ENCODE measurements at regions of chr4 and their contacts with region 1.

Region 1: GRCh38 chr4:184263910-184264732 is 46.4 kb upstream of the ENPP6 start:
- DNase-seq: peak; percentile 97
- ATAC-seq: peak; percentile 55
- H3K4me3 Mint-ChIP-seq: peak overlapping the region; percentile 8
- H3K27ac Mint-ChIP-seq: peak overlapping the region; percentile 65
- H3K4me1 Mint-ChIP-seq: peaks cover 55% of the 10 kb centered on the region
- H3K27me3 Mint-ChIP-seq: peaks cover 4% of the 10 kb centered on the region

Region 2: GRCh38 chr4:184237612-184238011 is 26.5 kb before region 1 on chr4:
- CTCF ChIA-PET with region 1: interaction called, 18 read pairs
- DNase-seq: peak; percentile 86
- ATAC-seq: peak; percentile 97
- H3K4me3 Mint-ChIP-seq: peak overlapping the region; percentile 35
- H3K27ac Mint-ChIP-seq: peak overlapping the region; percentile 90
- H3K4me1 Mint-ChIP-seq: peaks cover 50% of the 10 kb centered on the region
- H3K27me3 Mint-ChIP-seq: no peaks in the 10 kb centered on the region

Region 3: DNA sequence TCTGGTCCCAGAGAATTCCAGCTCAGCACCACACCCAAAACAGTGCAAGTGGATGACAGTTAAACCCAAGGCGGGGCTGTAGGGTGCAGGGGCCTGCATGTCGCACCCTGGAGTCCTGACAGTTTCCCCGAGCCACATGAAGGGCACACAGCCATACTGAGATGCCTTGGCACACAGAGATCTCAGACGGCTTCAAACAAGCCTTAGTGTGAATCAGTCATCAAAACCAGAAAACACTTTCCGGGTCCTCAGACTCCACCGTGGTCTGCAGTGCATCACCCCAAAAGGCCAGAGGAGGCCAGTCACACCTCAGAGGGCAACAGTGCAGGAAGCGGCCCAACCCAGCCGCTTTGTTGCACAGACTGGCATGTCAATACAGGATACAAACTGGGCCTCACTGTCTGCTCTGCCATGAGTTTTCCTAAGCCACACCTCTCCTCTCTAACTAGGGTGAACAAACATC is 18.2 kb after region 1 on chr4:
- CTCF ChIA-PET with region 1: interaction called, 153 read pairs
- DNase-seq: peak; percentile 88
- ATAC-seq: peak; percentile 86
- H3K4me3 Mint-ChIP-seq: peak overlapping the region; percentile 13
- H3K27ac Mint-ChIP-seq: peak overlapping the region; percentile 95
- H3K4me1 Mint-ChIP-seq: peaks cover 61% of the 10 kb centered on the region
- H3K27me3 Mint-ChIP-seq: no peaks in the 10 kb centered on the region

Region 4: DNA sequence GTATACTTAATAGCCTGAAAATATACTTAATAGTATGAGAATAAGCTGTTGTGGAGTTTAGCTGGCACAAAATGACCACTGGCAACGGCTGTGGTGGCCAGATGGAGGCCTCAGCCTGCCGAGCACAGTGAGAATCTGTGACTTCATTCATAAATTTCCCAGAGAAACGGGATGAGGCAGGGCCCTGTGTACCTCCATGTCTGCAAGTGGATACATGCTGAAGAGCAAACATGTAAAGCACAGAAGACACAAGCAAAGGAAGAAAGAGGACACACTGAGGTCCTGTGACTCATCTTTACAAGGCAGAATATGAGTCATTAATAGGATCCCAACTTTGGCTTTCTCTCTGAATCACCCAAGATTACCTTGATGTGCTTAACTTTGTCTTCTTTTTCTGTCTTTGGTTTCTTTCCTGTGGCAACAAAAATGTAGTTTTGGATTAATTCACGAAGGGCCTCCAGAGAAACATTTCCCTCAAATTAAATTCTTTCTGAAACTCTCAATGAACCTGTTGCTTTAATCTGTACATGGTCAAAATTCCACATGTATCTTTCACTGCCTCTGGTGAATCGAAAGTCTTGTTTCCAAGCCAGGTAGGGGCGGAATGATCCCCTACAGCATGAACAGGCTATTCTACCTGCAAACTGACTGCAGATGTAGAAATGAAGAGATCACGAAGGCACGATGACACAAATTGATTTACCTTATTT is 153.8 kb after region 1 on chr4:
- CTCF ChIA-PET with region 1: interaction called, 15 read pairs
- DNase-seq: peak; percentile 49
- ATAC-seq: peak; percentile 81
- H3K4me3 Mint-ChIP-seq: peak overlapping the region; percentile 75
- H3K27ac Mint-ChIP-seq: peak overlapping the region; percentile 95
- H3K4me1 Mint-ChIP-seq: peaks cover 86% of the 10 kb centered on the region
- H3K27me3 Mint-ChIP-seq: no peaks in the 10 kb centered on the region

Region 5: DNA sequence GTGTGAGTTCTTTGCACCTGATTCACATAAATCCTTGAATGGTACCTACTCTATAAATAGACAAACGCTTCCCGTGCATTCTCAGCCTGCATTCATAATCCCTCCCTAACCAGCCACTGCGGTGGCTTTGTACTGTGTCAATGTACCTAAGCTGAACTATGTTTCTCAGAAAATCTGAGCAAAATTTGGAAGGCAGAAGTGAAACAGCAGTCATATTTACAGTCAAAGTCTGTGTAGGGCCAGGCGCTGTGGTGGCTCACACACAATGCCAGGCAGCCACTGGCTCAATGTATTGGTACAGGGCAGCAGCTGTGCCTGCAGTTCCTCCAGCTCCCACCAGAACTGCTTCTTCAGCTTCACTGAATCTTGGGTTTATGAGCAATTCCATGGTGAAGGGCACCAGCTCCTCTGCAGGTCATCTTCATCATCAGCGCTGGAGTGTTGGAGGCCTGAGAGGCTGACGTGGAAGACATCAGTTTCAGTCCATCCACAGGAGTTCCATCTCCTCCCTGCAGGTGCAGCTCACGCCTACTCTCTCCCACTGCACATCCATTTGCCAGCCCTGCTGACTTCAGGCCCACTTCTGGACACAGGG is 242.5 kb after region 1 on chr4:
- CTCF ChIA-PET with region 1: interaction called, 10 read pairs
- DNase-seq: peak; percentile 76
- ATAC-seq: peak; percentile 92
- H3K4me3 Mint-ChIP-seq: no peak overlapping the region
- H3K27ac Mint-ChIP-seq: peak overlapping the region; percentile 77
- H3K4me1 Mint-ChIP-seq: peaks cover 25% of the 10 kb centered on the region
- H3K27me3 Mint-ChIP-seq: no peaks in the 10 kb centered on the region

Region 6: GRCh38 chr4:184538023-184538599 is 274.0 kb after region 1 on chr4:
- CTCF ChIA-PET with region 1: interaction called, 63 read pairs
- DNase-seq: peak; percentile 85
- ATAC-seq: peak; percentile 61
- H3K4me3 Mint-ChIP-seq: peak overlapping the region; percentile 90
- H3K27ac Mint-ChIP-seq: peak overlapping the region; percentile 95
- H3K4me1 Mint-ChIP-seq: peaks cover 50% of the 10 kb centered on the region
- H3K27me3 Mint-ChIP-seq: no peaks in the 10 kb centered on the region